Right ventricle myocardium superior (tissue), 1 donor: ENCODE measurements at regions of chr4 and their contacts with region 1.

Region 1: DNA sequence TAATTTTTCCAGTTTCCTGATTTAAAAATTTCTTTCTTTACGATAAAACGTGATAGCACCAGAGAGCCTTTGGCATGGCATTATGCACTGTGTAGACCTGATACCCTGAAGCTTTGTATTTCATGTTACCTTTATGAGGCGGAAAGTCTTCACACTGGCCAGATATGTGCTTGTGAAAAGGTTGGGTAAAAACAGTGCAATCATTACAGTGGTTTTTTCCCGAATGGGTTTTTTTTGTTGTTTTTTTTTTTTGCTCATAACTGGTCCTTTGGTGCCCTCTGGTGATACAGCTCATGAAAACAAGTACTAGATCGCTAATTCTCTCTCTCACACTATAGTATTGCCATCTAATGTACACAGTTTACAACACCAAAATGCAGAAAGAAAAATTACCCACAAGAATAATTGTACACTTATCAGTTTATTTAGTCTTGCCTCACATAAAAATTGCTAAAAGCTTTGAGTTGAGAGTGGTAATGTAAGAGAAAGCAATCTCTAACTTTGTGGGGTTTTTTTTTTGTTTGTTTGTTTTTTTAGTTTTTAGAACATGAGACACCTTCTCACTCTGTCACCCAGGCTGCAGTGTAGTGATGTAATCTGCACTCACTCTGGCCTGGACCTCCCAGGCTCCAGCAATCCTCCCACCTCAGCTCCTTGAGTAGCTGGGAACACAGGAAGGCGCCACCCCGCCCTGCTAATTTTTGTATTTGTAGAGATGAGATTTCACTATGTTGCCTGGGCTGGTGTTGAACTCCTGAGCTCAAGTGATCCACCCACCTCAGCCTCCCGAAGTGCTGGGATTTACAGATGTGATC is 21.3 kb downstream of the SPCS3 start:
- DNase-seq: no peak
- ATAC-seq: peak; percentile 65

Region 2: GRCh38 chr4:175947117-175947722 is 393.9 kb before region 1 on chr4:
- intact Hi-C with region 1: loop called (anchors 5 kb)
- DNase-seq: no peak
- ATAC-seq: no peak

Region 3: GRCh38 chr4:176150356-176150682 is 190.8 kb before region 1 on chr4:
- intact Hi-C with region 1: loop called (anchors 2 kb)
- DNase-seq: no peak
- ATAC-seq: peak; percentile 65